ENCODE measurements at regions of chr1 and their contacts with region 1.

Region 1: DNA sequence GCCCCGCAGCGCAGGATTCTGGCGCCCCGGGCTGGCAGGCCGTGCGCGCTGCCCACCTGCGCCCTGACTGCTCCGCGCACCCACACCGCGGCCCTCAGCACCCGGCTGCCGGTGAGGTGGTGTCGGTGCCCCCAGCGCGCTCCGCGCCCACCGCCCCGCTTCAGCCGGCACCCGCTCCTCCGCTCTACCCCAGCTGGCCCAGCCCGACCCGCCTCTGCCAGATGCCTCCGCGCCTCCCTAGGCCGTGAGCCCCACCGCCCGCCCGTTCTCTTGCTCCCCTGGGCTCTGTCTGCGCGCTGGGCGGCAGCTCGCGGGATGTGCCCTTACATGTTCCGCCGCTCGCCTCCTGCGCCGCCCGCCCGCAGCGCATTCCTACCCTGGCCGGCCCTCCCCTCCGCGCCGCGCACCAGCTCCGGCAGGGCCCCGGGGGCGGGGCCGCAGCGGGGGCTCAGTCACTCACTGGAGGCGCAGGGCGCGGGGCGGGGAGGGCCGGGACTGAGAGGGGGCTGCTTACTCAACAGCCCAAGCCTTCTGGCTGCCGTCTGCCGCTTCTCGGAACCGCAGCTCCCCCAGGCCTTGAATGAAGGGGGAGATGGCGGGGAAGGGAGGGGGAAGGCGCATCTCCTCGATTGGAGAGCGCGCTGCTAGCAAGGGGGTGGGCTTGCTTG is at the start of gene PHLDA3:
- DNase-seq: peak; percentile 83 to 87
- H3K4me3 ChIP-seq: peak within 1 kb of the TSS; percentile 65
- H3K4me3 Mint-ChIP-seq: peak within 1 kb of the TSS; percentile 84
- H3K27ac Mint-ChIP-seq: peak within 1 kb of the TSS; percentile 41
- H3K4me1 ChIP-seq: peaks cover 13% of the 10 kb centered on the region
- H3K4me1 Mint-ChIP-seq: no peaks in the 10 kb centered on the region
- H3K27me3 ChIP-seq: no peaks in the 10 kb centered on the region
- H3K27me3 Mint-ChIP-seq: no peaks in the 10 kb centered on the region
- CTCF ChIP-seq: no peak
- total RNA-seq, gene PHLDA3: 6.5 and 10.5 TPM in 2 replicates

Region 2: DNA sequence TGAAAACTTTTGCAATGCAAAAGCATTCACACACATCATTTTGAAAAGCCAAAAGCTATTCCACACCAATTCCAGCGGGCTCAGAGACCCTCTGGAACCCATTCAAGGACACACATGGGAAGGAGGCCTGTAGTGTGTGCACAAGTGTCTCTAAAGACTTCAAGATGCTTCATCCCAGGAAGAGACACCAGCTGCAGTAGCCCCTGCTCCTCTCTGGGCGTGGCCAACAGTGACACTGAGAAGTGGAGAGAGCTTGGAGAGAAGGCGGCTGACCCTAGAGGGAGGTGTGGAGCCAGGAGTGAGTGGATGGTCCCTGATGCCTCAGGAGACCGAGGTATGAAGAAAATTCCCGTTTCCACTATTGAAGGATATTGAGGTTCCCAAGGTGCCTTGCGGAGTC is 32.6 kb before region 1 on chr1:
- CTCF ChIA-PET with region 1: interaction called, 20 read pairs
- POLR2A ChIA-PET with region 1: interaction called, 3 read pairs
- intact Hi-C with region 1: no loop called
- DNase-seq: peak; percentile 66 to 72
- H3K4me3 ChIP-seq: no peak overlapping the region
- H3K4me3 Mint-ChIP-seq: no peak overlapping the region
- H3K27ac Mint-ChIP-seq: no peak overlapping the region
- H3K4me1 ChIP-seq: no peaks in the 10 kb centered on the region
- H3K4me1 Mint-ChIP-seq: peaks cover 6% of the 10 kb centered on the region
- H3K27me3 ChIP-seq: no peaks in the 10 kb centered on the region
- H3K27me3 Mint-ChIP-seq: peaks cover 3% of the 10 kb centered on the region
- CTCF ChIP-seq: peak in 1 of 2 experiments; percentile 44

Measured in Caco-2 (cell line).